Right ventricle myocardium superior (tissue), 1 donor: ENCODE measurements at regions of chr9 and their contacts with region 1.

Region 1: GRCh38 chr9:94084314-94084713 is at the start of gene PTPDC1:
- DNase-seq: no peak
- ATAC-seq: peak; percentile 41
- total RNA-seq, gene PTPDC1: 8.4 TPM

Region 2: DNA sequence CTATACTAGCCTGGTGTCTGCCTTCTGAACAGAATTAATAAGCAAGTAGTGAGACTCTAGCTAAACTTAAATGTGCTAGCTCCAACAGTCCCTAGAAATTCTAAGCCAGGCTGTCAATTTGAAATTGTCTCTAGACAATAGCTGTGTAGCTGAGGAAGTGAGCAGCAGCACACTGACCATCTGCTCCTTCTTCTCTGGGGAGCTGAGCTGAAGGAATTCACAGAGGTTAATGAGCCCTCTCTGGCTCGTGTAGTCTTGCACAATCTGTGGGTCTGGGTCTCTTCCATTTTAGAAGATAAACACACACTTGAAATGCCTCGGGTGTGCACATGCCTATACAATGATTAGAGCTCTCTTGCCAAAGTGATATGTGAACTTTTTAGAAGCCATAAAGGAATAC is 65.7 kb before region 1 on chr9:
- intact Hi-C with region 1: no loop called
- DNase-seq: no peak
- ATAC-seq: peak; percentile 36

Region 3: DNA sequence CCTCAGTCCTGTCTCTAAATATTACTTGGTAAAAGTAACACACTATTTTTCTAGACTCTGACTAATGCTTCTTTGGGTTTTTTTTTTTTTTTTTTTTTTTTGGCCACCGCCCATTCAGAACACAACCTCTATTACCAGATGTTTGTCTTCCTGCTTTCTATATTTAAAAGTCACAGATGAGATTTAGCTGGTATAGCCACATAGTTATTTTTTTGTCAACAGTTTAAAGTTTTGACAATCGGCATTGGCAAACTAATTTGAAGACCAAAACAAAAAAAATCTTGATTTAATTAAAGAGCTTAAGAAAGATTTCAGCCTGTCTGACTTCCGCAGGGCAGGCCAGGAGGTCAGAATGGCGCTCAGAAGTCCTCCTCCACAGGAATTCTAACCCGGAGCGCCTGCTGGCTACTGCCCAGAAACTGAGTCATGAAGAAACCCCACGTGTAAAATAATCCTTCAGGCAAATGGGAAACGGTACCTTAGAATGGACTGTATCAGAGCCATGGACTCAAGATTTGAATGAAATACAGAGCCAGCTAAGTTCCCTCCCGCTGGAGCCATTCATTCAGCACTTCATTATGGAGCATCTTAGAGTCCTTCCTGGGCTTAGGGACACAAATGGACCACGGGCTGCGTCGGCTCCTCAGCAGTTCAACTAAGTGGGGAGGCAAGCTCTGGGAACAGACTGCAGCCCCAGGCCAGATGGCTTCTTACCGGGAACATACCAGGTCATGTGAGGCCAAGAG is 55.5 kb after region 1 on chr9:
- intact Hi-C with region 1: loop called (anchors 10 kb)
- DNase-seq: peak; percentile 88
- ATAC-seq: peak; percentile 92